ENCODE measurements at regions of chr15 and their contacts with region 1.

Region 1: GRCh38 chr15:68924866-68925560 is 5.3 kb upstream of the SPESP1 start:
- DNase-seq: peak; percentile 73 to 88 (median 88)
- ATAC-seq: peak; percentile 89
- H3K4me3 ChIP-seq: no peak overlapping the region
- H3K27ac ChIP-seq: no peak overlapping the region
- H3K4me1 ChIP-seq: no peaks in the 10 kb centered on the region
- H3K27me3 ChIP-seq: no peaks in the 10 kb centered on the region

Region 2: DNA sequence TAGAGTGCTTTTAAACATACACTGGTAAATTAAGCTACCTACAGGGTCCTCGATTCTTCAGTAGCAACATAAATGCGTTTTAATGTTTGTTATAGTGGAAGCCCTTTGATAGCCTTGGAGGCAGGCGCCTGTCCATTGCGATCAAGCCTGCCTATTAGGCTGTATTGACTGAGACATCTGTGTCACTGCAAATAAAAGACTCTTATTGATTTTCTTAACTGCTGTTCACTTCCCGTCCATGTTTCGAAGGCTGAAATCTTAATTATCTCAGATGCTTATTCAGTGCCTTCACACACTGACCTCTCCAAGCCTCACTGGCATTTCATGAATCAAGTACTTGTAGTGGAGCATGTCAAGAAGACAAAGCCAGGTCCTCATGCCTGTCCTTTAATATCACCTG is 1331.5 kb before region 1 on chr15:
- intact Hi-C with region 1: no loop called
- DNase-seq: no peak
- ATAC-seq: no peak
- H3K4me3 ChIP-seq: no peak overlapping the region
- H3K27ac ChIP-seq: no peak overlapping the region
- H3K4me1 ChIP-seq: no peaks in the 10 kb centered on the region
- H3K27me3 ChIP-seq: no peaks in the 10 kb centered on the region

Region 3: DNA sequence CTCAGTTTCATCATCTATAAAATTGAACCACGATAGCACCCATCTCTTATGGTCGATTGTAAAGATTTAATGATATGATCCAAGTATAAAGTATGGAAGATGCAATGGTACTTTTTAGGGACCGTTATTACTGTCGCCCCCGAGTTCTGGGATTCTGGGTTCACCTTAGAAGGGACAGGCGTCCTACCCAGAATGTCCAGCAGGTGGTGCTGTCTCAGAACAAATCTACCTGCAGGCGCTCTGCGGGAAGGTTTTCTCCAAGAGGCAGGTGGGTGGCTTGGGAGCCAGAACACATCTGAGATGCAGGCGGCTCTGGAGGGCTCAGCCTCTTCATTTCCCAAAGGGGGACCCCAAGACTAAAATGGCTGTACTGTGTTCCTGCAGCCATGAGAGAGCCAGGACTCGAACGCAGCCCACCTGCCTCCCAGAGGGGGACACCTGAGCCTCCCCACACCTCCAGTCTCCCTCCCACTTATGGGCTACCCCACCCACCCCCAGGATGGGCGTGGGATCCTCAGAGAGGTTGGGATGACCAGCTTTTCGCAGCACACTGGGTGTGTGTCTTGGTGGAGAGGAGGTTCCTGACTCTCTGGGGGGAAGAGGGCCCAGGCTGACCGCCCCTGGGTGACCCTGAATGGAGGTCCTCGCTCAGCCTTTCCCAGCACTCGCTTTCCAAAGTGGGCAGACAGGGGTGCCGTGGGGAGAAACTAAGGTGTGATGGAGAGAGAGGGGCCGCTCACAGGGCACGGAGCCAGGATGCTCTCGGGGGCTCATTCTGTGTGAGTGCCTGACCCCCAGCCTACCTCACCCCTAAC is 374.3 kb before region 1 on chr15:
- intact Hi-C with region 1: loop called in 3 of 4 experiments (anchors 5 kb)
- DNase-seq: peak; percentile 66 to 91 (median 85)
- ATAC-seq: peak; percentile 25 to 35
- H3K4me3 ChIP-seq: no peak overlapping the region
- H3K27ac ChIP-seq: no peak overlapping the region
- H3K4me1 ChIP-seq: peaks cover 2% of the 10 kb centered on the region
- H3K27me3 ChIP-seq: no peaks in the 10 kb centered on the region

Region 4: GRCh38 chr15:68559345-68560310 is 365.4 kb before region 1 on chr15:
- intact Hi-C with region 1: loop called in 3 of 4 experiments (anchors 5 kb)
- DNase-seq: peak; percentile 82 to 94 (median 93)
- ATAC-seq: peak; percentile 91 to 94
- H3K4me3 ChIP-seq: peak overlapping the region; percentile 26
- H3K27ac ChIP-seq: no peak overlapping the region
- H3K4me1 ChIP-seq: no peaks in the 10 kb centered on the region
- H3K27me3 ChIP-seq: no peaks in the 10 kb centered on the region

Region 5: DNA sequence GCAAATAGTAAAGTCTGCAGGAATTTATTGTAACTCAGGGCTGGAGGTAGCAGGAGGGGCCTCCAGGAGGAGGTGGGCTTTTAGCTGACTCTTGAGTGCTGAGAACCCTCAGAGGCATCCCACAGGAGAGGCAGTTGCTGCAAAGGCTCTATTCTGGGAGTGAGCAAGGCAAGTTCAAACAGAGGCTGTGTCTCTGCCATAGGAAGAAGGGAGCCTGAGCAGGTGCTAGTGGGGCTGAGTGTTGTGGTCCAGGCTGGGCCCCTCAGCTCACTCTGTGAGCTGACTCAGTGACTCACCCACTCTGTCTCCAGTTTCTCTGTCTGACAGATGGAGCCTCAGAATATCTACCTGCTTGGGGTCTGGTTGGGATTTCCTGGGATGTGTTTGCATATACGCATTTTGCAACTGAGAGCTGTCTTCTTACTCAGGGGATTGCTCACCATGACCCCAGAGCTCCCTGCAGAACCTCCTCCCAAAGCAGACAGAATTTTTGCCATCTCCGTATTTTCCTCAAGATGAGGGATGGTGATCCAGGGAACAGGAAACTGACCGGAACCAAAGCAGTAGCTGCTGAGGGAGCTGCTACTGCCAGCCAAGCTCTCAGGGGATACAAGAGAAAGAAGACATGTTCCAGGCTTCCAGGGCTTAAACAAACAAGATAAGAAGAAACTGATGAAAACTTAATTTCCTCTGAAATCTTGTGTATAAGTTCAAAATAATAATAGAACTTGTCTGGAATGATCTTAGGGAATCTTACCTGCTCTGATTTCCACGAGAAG is 75.9 kb after region 1 on chr15:
- intact Hi-C with region 1: no loop called
- DNase-seq: no peak
- ATAC-seq: peak; percentile 42 to 53
- H3K4me3 ChIP-seq: no peak overlapping the region
- H3K27ac ChIP-seq: no peak overlapping the region
- H3K4me1 ChIP-seq: no peaks in the 10 kb centered on the region
- H3K27me3 ChIP-seq: no peaks in the 10 kb centered on the region